Right ventricle myocardium inferior (tissue), 1 donor: ENCODE measurements at regions of chr1 and their contacts with region 1.

Region 1: GRCh38 chr1:169511316-169512028 is 25.7 kb upstream of the SLC19A2 start:
- DNase-seq: no peak
- ATAC-seq: peak; percentile 85

Region 2: GRCh38 chr1:169031566-169032201 is 479.8 kb before region 1 on chr1:
- intact Hi-C with region 1: no loop called
- DNase-seq: no peak
- ATAC-seq: no peak

Region 3: DNA sequence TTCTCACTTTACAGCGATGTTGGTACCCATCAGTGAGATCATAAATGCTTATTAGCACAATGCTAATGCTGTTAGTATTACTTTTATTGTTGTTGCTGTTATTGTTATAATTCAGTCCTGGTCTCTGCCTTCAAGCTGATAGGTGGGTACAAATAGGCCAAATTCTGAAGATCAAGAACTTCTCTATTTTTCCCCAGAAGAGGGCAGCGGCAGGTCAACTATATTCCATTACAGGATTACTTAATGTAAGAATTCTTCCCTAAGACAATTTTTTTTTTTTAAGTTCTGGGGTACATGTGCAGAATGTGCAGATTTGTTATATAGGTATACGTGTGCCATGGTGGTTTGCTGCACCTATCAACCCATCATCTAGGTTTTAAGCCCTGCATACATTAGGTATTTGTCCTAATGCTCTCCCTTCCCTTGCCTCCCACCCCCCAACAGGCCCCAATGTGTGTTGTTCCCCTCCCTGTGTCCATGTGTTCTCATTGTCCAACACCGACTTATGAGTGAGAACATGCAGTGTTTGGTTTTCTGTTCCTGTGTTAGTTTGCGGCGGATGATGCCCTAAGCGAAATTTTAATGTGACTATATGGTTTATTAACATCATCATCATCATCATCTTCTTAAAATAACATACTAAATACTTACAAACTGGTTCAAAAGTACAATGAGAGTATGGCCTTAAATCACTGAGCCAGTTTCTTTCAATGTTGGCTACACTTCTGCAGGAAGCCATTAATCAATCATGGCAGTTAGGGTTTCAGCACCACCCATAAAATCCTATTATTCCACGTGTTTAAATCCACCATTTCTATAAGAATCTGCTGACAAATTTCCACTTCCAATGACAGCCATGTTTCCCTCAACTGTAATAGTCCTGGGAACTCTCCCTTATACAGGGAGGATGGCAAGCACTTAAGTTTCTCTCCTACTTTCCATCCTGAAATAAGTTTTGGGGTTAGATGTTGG is 44.9 kb before region 1 on chr1:
- intact Hi-C with region 1: loop called (anchors 5 kb)
- DNase-seq: no peak
- ATAC-seq: no peak

Region 4: DNA sequence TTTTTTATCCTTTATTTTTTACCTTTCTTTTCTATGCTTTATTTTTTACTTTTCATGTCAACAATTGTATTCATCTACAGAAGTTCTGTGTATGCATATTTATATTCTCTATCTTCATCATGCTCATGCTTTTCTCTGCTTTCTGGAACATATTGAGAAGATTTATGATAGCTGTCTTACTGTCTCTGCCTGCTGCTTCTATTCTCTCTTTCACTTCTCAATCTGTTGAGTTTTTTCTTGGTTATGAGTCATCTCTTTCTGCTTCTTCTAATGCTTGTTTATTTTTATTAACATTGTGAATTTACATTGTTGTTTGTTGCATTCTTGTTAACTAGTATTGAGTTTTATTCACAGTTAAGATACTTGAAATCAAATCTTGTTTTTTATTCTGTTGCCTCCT is 52.2 kb after region 1 on chr1:
- intact Hi-C with region 1: no loop called
- DNase-seq: no peak
- ATAC-seq: no peak